GM10248 (cell line): ENCODE measurements at regions of chr17 and their contacts with region 1.

Region 1: GRCh38 chr17:57009737-57010445 is 32.0 kb downstream of the SCPEP1 start:
- DNase-seq: peak; percentile 74
- CTCF ChIP-seq: peak; percentile 84

Region 2: DNA sequence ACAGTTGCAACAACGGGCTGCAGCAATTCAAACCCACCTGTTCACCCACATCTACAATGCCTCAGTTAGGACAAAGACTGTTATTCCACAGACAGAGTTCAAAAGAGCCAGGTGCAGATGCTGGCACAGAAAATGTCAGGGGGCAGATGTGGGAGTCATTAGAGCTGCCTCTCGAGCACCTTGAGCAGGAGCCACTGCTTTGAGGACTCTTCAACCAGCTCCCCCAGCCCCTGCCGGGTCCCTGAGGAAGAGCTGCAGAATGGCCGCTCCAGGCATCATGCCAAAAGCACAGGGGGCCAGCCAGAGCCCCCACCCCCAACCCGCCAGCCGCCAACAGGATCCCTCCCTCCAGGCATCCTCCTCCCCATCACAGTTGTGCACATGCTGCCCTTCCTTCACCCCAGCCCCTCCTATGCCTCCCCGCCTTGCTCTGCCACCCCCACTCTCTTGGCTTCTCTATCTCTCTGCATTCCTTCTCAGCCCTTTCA is 196.9 kb before region 1 on chr17:
- CTCF ChIA-PET with region 1: no interaction called
- POLR2A ChIA-PET with region 1: no interaction called
- DNase-seq: no peak
- CTCF ChIP-seq: no peak

Region 3: GRCh38 chr17:56994009-56994792 is 15.7 kb before region 1 on chr17:
- CTCF ChIA-PET with region 1: interaction called, 65 read pairs
- POLR2A ChIA-PET with region 1: no interaction called
- DNase-seq: no peak
- CTCF ChIP-seq: no peak

Region 4: DNA sequence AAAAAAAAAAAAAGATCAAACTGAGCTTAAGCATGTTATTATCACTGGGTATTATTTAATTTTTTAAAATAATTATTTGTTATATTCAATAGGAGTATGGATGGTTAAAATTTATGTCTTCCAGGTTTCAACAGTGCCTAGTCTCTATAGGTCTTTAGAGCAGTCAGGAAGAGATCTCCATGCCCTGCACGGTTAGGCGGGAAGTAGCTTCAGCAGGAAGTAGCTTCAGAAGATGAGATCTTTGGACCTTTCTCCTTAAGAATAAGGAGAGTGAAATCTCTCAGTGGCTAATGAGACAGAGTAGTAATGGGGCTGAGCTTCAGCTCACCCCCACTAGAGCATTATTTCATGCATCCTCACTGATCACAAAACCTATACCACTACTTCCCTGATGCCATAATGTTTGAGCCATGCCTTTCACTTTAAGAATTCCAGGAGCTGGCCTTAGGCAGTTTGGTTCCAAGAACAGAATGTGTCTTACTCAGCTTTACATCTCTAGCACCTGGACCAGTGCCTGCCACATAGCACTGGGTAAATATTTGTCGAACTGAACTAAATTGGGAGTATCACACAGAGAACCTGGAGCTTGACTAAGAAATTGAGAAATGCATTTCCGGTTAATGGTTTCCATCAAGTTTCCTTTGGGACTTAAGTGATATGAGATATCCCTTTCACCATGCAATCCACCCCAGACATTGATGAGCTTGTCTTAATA is 11.5 kb after region 1 on chr17:
- CTCF ChIA-PET with region 1: interaction called, 17 read pairs
- POLR2A ChIA-PET with region 1: no interaction called
- DNase-seq: no peak
- CTCF ChIP-seq: no peak